B cell (primary cell): ENCODE measurements at regions of chr22 and their contacts with region 1.

Region 1: GRCh38 chr22:17171313-17172171 is 12.5 kb upstream of the HDHD5 start:
- DNase-seq: peak; percentile 87
- ATAC-seq: peak; percentile 89
- H3K4me3 ChIP-seq: peak overlapping the region; percentile 16 to 69 (median 58)
- H3K4me3 Mint-ChIP-seq: peak overlapping the region; percentile 86
- H3K27ac ChIP-seq: peak overlapping the region in 1 of 2 donors; percentile 6
- H3K27ac Mint-ChIP-seq: peak overlapping the region; percentile 73
- H3K4me1 ChIP-seq: peaks cover 2 to 11% of the 10 kb centered on the region in 2 donors
- H3K4me1 Mint-ChIP-seq: peaks cover 8% of the 10 kb centered on the region
- H3K27me3 ChIP-seq: no peaks in the 10 kb centered on the region
- H3K27me3 Mint-ChIP-seq: peaks cover 3% of the 10 kb centered on the region
- CTCF ChIP-seq: peak; percentile 92

Region 2: GRCh38 chr22:17158568-17159503 is 12.7 kb before region 1 on chr22 and contains the start of gene HDHD5:
- CTCF ChIA-PET with region 1: interaction called, 31 read pairs
- POLR2A ChIA-PET with region 1: no interaction called
- intact Hi-C with region 1: loop called (anchors 1 kb)
- DNase-seq: peak; percentile 93
- ATAC-seq: peak; percentile 92
- H3K4me3 ChIP-seq: peak within 1 kb of the TSS; percentile 30 to 92 (median 84)
- H3K4me3 Mint-ChIP-seq: peak within 1 kb of the TSS; percentile 88
- H3K27ac ChIP-seq: peak within 1 kb of the TSS; percentile 38 to 75
- H3K27ac Mint-ChIP-seq: peak within 1 kb of the TSS; percentile 75
- H3K4me1 ChIP-seq: peaks cover 12 to 21% of the 10 kb centered on the region in 2 donors
- H3K4me1 Mint-ChIP-seq: peaks cover 21% of the 10 kb centered on the region
- H3K27me3 ChIP-seq: no peaks in the 10 kb centered on the region
- H3K27me3 Mint-ChIP-seq: no peaks in the 10 kb centered on the region
- CTCF ChIP-seq: no peak
- total RNA-seq, gene HDHD5: 17.7 and 23.3 TPM in 2 replicates

Region 3: GRCh38 chr22:17205432-17205831 is 33.9 kb after region 1 on chr22:
- CTCF ChIA-PET with region 1: interaction called, 21 read pairs
- POLR2A ChIA-PET with region 1: no interaction called
- intact Hi-C with region 1: no loop called
- DNase-seq: no peak
- ATAC-seq: peak; percentile 49
- H3K4me3 ChIP-seq: no peak overlapping the region
- H3K4me3 Mint-ChIP-seq: no peak overlapping the region
- H3K27ac ChIP-seq: no peak overlapping the region
- H3K27ac Mint-ChIP-seq: no peak overlapping the region
- H3K4me1 ChIP-seq: no peaks in the 10 kb centered on the region
- H3K4me1 Mint-ChIP-seq: no peaks in the 10 kb centered on the region
- H3K27me3 ChIP-seq: no peaks in the 10 kb centered on the region
- H3K27me3 Mint-ChIP-seq: no peaks in the 10 kb centered on the region
- CTCF ChIP-seq: no peak

Region 4: DNA sequence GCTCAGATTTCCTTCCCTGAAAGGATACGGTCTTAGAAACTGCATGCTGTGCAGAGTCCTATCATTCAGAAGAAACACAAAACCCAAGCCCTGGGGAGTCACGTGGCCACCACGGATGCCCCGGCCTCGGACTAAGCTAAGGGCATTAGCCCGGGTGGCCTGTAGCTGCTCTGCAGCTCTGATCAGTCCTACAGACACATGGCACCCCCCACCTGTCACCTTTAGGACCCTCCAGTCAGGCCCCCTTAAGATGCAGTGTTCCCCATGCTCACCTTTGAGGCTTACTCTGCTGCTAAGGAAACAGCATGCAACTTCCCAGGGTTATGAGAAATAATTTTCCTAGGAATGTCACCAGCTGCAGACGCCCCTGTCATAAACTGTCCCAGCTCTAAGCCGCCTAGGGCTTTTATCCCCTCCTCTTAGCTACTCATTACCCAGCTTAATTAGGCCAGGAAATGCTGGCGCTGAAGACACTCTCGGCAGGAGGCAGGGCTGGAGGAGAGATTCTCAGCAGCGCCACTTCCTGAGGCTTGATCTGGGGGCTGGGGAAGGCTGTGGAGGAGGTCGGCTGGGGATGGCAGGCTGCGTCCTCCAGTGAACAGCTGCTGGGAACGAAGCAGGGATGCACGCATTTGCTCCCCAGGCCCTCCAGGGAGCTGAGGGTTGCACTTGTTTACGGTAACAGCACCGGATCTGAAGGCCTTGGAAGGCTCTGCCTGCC is 94.9 kb after region 1 on chr22:
- CTCF ChIA-PET with region 1: interaction called, 10 read pairs
- POLR2A ChIA-PET with region 1: no interaction called
- intact Hi-C with region 1: no loop called
- DNase-seq: no peak
- ATAC-seq: no peak
- H3K4me3 ChIP-seq: no peak overlapping the region
- H3K4me3 Mint-ChIP-seq: no peak overlapping the region
- H3K27ac ChIP-seq: no peak overlapping the region
- H3K27ac Mint-ChIP-seq: no peak overlapping the region
- H3K4me1 ChIP-seq: peaks cover 0 to 4% of the 10 kb centered on the region in 2 donors
- H3K4me1 Mint-ChIP-seq: peaks cover 6% of the 10 kb centered on the region
- H3K27me3 ChIP-seq: no peaks in the 10 kb centered on the region
- H3K27me3 Mint-ChIP-seq: no peaks in the 10 kb centered on the region
- CTCF ChIP-seq: no peak

Region 5: GRCh38 chr22:17501679-17502285 is 330.2 kb after region 1 on chr22:
- CTCF ChIA-PET with region 1: interaction called, 302 read pairs
- POLR2A ChIA-PET with region 1: interaction called, 4 read pairs
- intact Hi-C with region 1: no loop called
- DNase-seq: peak; percentile 82
- ATAC-seq: peak; percentile 78
- H3K4me3 ChIP-seq: no peak overlapping the region
- H3K4me3 Mint-ChIP-seq: no peak overlapping the region
- H3K27ac ChIP-seq: no peak overlapping the region
- H3K27ac Mint-ChIP-seq: no peak overlapping the region
- H3K4me1 ChIP-seq: peaks cover 0 to 3% of the 10 kb centered on the region in 2 donors
- H3K4me1 Mint-ChIP-seq: peaks cover 4% of the 10 kb centered on the region
- H3K27me3 ChIP-seq: no peaks in the 10 kb centered on the region
- H3K27me3 Mint-ChIP-seq: no peaks in the 10 kb centered on the region
- CTCF ChIP-seq: peak; percentile 91

Region 6: DNA sequence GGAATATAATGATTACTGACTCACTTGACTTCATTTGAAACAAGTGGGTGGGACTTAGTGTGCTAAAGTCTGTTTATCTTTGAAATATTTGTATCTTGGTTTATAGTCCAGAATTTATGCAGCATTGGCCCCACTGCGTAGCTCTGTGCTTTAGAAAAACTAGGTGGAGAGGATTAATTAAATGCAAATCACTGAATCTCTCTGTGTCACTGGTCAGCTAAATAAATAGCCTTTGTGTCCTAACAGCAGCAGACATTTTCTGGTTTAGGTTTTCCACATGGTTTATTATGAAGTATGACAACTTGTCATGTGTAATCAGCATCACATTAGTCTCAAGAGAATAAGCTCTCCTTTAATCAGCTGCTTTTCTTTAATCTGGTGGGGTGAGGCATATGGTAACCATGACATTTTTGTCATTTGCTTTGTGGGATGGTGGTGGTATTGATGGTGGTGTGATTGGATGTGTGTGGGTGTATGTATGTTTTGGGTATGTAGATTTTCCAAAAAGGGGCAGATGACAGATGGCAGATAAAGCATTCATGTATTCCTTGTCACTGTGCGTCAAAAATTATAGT is 501.0 kb after region 1 on chr22:
- CTCF ChIA-PET with region 1: no interaction called
- POLR2A ChIA-PET with region 1: no interaction called
- intact Hi-C with region 1: no loop called
- DNase-seq: no peak
- ATAC-seq: no peak
- H3K4me3 ChIP-seq: no peak overlapping the region
- H3K4me3 Mint-ChIP-seq: no peak overlapping the region
- H3K27ac ChIP-seq: no peak overlapping the region
- H3K27ac Mint-ChIP-seq: no peak overlapping the region
- H3K4me1 ChIP-seq: peaks cover 0 to 5% of the 10 kb centered on the region in 2 donors
- H3K4me1 Mint-ChIP-seq: peaks cover 14% of the 10 kb centered on the region
- H3K27me3 ChIP-seq: no peaks in the 10 kb centered on the region
- H3K27me3 Mint-ChIP-seq: no peaks in the 10 kb centered on the region
- CTCF ChIP-seq: no peak